Natural killer cell (primary cell): ENCODE measurements at regions of chr6 and their contacts with region 1.

Region 1: DNA sequence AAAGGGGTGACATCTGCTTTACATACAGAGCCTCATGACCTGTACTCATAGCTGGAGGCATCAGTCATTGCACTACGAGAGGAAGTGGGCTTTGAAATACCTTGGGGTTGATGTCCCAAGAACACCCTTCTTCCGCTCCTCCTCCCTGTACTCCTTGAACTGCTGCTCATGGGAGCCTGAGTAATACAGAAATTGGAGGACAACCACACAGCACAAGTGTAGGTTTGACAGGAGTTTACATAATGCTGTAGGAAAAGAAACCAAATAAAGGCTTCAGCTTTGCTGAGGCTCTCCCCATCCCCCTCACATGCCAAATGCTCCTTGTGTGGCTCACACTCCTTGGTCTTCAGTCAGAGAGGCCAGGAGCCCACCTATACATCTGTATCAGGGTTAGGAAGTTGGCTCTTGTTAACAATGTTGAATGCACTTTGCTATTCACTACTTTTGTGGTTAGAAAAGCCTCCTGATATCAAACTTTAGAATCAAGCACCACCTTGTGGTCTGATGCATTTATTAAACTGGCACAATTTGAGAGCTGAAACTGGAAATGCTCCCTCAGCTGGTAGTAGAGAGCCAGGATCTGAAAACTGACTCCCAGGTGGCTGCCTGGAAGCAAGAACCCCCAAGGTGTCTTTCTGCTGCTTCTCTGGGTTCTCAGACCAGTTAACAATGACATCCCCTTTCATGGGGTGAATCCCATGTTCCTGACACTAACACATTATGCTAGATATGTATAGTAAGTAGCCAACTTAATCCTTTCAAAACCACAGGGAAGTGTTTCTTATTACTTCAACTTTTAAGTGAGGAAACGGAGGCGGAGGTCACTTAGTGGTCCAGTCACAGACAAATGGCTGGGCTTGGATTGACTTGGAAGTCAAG is 56.2 kb upstream of the EDN1 start:
- DNase-seq: peak in 1 of 2 donors; percentile 80
- ATAC-seq: peak; percentile 18 to 67 (median 62)
- H3K4me3 ChIP-seq: no peak overlapping the region
- H3K4me3 Mint-ChIP-seq: no peak overlapping the region
- H3K27ac ChIP-seq: no peak overlapping the region
- H3K27ac Mint-ChIP-seq: no peak overlapping the region
- H3K4me1 ChIP-seq: peaks cover 8% of the 10 kb centered on the region
- H3K4me1 Mint-ChIP-seq: peaks cover 9 to 14% of the 10 kb centered on the region in 2 donors
- H3K27me3 ChIP-seq: no peaks in the 10 kb centered on the region
- H3K27me3 Mint-ChIP-seq: no peaks in the 10 kb centered on the region
- CTCF ChIP-seq: peak; percentile 46

Region 2: GRCh38 chr6:11700118-11700718 is 533.7 kb before region 1 on chr6:
- intact Hi-C with region 1: loop called (anchors 5 kb)
- DNase-seq: peak in 1 of 2 donors; percentile 68
- ATAC-seq: no peak
- H3K4me3 ChIP-seq: no peak overlapping the region
- H3K4me3 Mint-ChIP-seq: no peak overlapping the region
- H3K27ac ChIP-seq: no peak overlapping the region
- H3K27ac Mint-ChIP-seq: no peak overlapping the region
- H3K4me1 ChIP-seq: no peaks in the 10 kb centered on the region
- H3K4me1 Mint-ChIP-seq: no peaks in the 10 kb centered on the region
- H3K27me3 ChIP-seq: no peaks in the 10 kb centered on the region
- H3K27me3 Mint-ChIP-seq: no peaks in the 10 kb centered on the region
- CTCF ChIP-seq: peak; percentile 51